ENCODE measurements at regions of chr5 and their contacts with region 1.

Region 1: DNA sequence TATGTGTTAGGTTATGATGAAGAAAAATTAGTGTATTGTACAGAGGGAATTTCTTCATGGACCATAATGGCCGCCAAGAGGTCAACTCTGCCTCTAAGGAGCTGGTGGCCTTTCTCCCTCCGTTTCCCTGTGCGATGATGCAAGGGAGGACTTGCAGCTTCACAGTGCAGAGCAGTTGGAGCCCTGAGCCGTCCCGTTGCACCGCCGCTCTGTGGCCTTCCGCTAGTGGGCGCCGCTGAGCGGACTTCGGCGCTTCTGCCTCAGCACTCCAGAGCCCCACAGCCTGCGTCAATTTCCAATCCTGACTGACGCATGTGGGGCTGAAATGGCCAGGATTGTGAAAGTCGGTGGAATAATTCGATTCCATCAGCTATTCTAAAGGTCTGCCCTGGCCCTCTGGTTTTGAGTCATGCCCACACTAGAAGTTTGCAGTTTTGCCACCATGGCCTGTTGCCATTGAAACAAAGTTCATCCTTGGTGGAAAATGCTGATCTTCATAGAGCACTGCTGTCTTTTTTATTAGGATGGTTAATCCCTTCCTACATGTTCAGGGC is 22.7 kb upstream of the LECT2 start:
- DNase-seq: peak in 2 of 9 donors; percentile 52 to 58
- ATAC-seq: peak; percentile 93
- H3K4me3 ChIP-seq: no peak overlapping the region
- H3K4me3 Mint-ChIP-seq: no peak overlapping the region
- H3K27ac ChIP-seq: no peak overlapping the region
- H3K27ac Mint-ChIP-seq: no peak overlapping the region
- H3K4me1 ChIP-seq: no peaks in the 10 kb centered on the region
- H3K4me1 Mint-ChIP-seq: no peaks in the 10 kb centered on the region
- H3K27me3 ChIP-seq: peaks cover 0 to 3% of the 10 kb centered on the region in 2 donors
- H3K27me3 Mint-ChIP-seq: peaks cover 32 to 62% (median 43%) of the 10 kb centered on the region in 5 donors

Region 2: DNA sequence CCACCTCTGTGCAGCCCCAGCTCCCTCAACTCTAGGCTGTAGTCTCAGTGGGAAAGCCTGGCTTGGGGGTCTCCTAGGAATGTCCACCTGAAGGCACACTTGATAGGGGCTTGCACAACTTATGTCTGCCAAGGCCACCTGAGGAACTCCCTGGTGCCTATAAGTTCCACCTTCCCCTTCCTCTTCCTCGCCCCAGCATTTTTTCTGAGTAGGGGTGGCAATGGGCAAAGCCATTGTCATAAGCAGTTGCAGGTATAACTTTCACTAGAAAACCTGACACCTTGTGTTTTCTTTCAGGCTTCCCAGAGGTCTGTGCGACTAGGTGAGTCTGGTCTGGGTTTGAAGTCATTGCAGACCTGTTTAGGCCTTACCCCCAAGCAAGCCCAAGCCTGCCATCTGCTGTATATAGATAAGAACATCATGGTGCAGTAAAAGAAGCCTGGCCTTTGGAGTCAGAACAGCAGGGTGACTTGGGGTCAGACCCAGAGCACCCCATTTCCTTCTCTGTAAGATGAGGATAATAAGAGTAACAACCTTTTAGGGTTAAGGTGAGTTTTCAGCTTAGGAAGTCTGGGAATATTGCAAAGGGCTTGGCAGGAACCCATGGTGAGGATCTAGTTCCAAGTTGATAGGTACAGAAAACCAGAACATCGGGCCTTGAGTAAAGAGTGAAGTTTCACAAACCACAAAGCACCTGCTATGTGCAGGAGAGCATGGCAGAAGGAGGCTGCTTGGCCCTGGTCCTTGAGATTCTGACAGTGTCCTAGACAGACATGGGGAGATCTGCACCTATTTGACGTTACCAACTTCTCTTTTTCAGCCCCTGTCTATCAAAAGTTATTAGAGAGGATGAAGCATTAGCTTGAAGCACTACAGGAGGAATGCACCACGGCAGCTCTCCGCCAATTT is 85.2 kb after region 1 on chr5:
- CTCF ChIA-PET with region 1: no interaction called
- POLR2A ChIA-PET with region 1: no interaction called
- intact Hi-C with region 1: loop called in 1 of 2 experiments (anchors 1 kb)
- DNase-seq: no peak
- ATAC-seq: peak; percentile 55
- H3K4me3 ChIP-seq: no peak overlapping the region
- H3K4me3 Mint-ChIP-seq: no peak overlapping the region
- H3K27ac ChIP-seq: no peak overlapping the region
- H3K27ac Mint-ChIP-seq: no peak overlapping the region
- H3K4me1 ChIP-seq: no peaks in the 10 kb centered on the region
- H3K4me1 Mint-ChIP-seq: peaks cover 0 to 2% (median 0%) of the 10 kb centered on the region in 7 donors
- H3K27me3 ChIP-seq: no peaks in the 10 kb centered on the region
- H3K27me3 Mint-ChIP-seq: peaks cover 0 to 5% (median 0%) of the 10 kb centered on the region in 5 donors

Measured in naive thymus-derived CD4-positive, alpha-beta T cell (primary cell).